Activated B cell treated with CpG ODN at 0.5 μM for 24 hours (primary cell): ENCODE measurements at regions of chr10 and their contacts with region 1.

Region 1: DNA sequence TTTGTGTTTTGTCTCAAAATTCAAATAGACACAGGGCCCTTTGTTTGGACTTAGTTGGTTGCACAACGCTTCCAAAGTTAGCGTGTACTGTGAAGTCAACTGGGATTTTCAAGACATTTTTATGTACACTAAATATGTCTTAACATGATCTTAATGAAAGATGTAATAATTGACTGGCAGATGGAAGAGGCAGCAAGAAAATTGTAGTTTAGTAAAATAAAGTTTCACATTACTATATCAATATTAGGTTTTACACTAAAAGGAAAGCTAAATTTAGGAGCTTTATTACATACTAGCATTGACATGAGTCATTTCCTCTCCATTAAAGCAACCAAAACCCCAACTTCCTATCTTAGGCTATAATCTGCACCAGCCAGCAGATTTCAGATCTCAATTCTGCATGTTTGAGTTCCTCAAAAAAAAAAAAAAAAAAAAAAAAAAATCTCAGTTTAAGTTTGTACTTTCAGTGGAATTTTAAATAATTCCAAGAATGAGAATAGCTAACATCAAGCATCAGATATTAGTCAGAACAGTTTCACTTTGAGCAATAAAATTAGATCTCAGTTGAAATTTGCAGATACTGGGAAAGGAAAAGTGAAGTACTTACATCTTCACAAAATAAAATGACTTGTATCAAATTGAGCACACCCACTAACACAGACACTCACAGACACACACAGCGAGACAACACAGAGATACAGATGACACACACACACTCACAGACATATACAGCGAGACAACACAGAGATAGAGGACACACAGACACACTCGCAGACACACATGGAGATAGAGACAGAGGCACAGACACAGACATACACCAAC is 346.6 kb upstream of the KLF6 start:
- DNase-seq: no peak
- ATAC-seq: peak; percentile 75
- H3K4me3 Mint-ChIP-seq: no peak overlapping the region
- H3K27ac Mint-ChIP-seq: no peak overlapping the region
- H3K4me1 Mint-ChIP-seq: peaks cover 35% of the 10 kb centered on the region
- H3K27me3 Mint-ChIP-seq: no peaks in the 10 kb centered on the region
- CTCF ChIP-seq: no peak

Region 2: GRCh38 chr10:3852147-3852904 is 279.3 kb before region 1 on chr10:
- CTCF ChIA-PET with region 1: no interaction called
- POLR2A ChIA-PET with region 1: interaction called, 6 read pairs
- intact Hi-C with region 1: loop called (anchors 1 kb)
- DNase-seq: no peak
- ATAC-seq: peak; percentile 80
- H3K4me3 Mint-ChIP-seq: peak overlapping the region; percentile 56
- H3K27ac Mint-ChIP-seq: peak overlapping the region; percentile 88
- H3K4me1 Mint-ChIP-seq: peaks cover 36% of the 10 kb centered on the region
- H3K27me3 Mint-ChIP-seq: no peaks in the 10 kb centered on the region
- CTCF ChIP-seq: no peak

Region 3: DNA sequence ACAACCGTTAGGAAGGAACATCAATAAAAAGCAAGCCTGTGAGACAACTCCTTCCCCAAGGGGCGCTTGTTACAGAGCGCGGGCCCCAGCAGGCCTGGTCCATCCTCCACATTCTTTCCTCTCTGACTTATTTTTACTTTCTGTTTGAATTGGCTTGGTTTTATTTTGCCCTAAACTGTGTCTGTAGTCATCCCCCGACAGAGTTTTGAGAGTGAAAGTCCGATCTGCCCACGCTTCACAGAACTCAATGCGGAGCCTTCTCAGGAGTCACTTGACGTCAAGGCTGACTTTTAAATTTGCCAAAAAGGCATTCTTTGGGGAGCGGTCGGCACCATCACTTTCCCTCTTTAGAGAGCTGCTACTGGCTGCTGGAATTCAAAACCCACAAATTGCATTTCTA is 196.5 kb before region 1 on chr10:
- CTCF ChIA-PET with region 1: no interaction called
- POLR2A ChIA-PET with region 1: no interaction called
- intact Hi-C with region 1: loop called (anchors 5 kb)
- DNase-seq: peak; percentile 31
- ATAC-seq: peak; percentile 98
- H3K4me3 Mint-ChIP-seq: peak overlapping the region; percentile 67
- H3K27ac Mint-ChIP-seq: peak overlapping the region; percentile 88
- H3K4me1 Mint-ChIP-seq: peaks cover 31% of the 10 kb centered on the region
- H3K27me3 Mint-ChIP-seq: no peaks in the 10 kb centered on the region
- CTCF ChIP-seq: no peak

Region 4: DNA sequence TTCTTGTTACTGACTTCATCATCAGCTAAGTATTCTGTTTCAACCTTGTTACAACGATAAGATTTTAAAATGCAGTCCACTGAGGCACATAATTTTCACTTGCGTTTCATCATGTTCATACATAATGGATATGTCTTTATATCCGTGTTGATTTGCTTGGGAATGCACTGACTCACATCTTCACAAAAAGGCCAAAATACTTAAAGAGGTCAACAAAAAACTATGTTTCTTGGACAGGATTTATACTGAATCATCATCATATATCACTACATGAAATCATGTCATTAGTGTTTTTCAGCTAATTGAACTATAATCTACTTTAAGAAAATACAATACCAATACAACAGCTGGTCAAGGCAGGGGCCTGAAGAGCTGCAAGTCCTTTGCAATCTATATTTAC is 22.1 kb before region 1 on chr10:
- CTCF ChIA-PET with region 1: no interaction called
- POLR2A ChIA-PET with region 1: no interaction called
- intact Hi-C with region 1: loop called (anchors 2 kb)
- DNase-seq: no peak
- ATAC-seq: no peak
- H3K4me3 Mint-ChIP-seq: no peak overlapping the region
- H3K27ac Mint-ChIP-seq: no peak overlapping the region
- H3K4me1 Mint-ChIP-seq: peaks cover 24% of the 10 kb centered on the region
- H3K27me3 Mint-ChIP-seq: no peaks in the 10 kb centered on the region
- CTCF ChIP-seq: no peak

Region 5: GRCh38 chr10:4291990-4292389 is 160.4 kb after region 1 on chr10:
- CTCF ChIA-PET with region 1: no interaction called
- POLR2A ChIA-PET with region 1: interaction called, 12 read pairs
- intact Hi-C with region 1: no loop called
- DNase-seq: no peak
- ATAC-seq: no peak
- H3K4me3 Mint-ChIP-seq: no peak overlapping the region
- H3K27ac Mint-ChIP-seq: no peak overlapping the region
- H3K4me1 Mint-ChIP-seq: no peaks in the 10 kb centered on the region
- H3K27me3 Mint-ChIP-seq: no peaks in the 10 kb centered on the region
- CTCF ChIP-seq: no peak

Region 6: GRCh38 chr10:5446390-5446926 is 1314.8 kb after region 1 on chr10:
- CTCF ChIA-PET with region 1: no interaction called
- POLR2A ChIA-PET with region 1: interaction called, 13 read pairs
- intact Hi-C with region 1: no loop called
- DNase-seq: peak; percentile 90
- ATAC-seq: peak; percentile 91
- H3K4me3 Mint-ChIP-seq: peak overlapping the region; percentile 86
- H3K27ac Mint-ChIP-seq: peak overlapping the region; percentile 87
- H3K4me1 Mint-ChIP-seq: peaks cover 56% of the 10 kb centered on the region
- H3K27me3 Mint-ChIP-seq: no peaks in the 10 kb centered on the region
- CTCF ChIP-seq: no peak